ENCODE measurements at regions of chr3 and their contacts with region 1.

Region 1: DNA sequence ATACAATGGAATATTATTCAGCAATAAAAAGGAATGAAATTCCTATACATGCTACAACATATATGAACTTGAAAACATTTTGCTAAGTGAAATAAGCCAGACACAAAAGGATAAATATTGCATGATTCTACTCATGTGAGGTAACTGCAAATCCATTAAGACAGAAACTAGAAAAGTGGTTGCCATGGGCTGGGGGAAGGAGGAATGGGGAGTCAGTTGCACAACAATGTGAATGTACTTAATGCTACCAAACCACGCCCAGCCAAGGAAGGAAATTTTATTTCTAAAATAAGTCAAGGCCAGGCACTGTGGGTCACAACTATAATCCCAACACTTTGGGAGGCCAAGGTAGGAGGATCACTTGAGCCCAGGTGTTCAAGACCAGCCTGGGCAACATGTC is 9.8 kb upstream of the GMPPB start:
- DNase-seq: no peak
- ATAC-seq: no peak
- H3K4me3 Mint-ChIP-seq: no peak overlapping the region
- H3K27ac Mint-ChIP-seq: no peak overlapping the region
- H3K4me1 Mint-ChIP-seq: peaks cover under 1% of the 10 kb centered on the region
- H3K27me3 Mint-ChIP-seq: no peaks in the 10 kb centered on the region

Region 2: GRCh38 chr3:49454458-49454857 is 279.1 kb before region 1 on chr3:
- CTCF ChIA-PET with region 1: no interaction called
- POLR2A ChIA-PET with region 1: no interaction called
- intact Hi-C with region 1: no loop called
- DNase-seq: no peak
- ATAC-seq: no peak
- H3K4me3 Mint-ChIP-seq: no peak overlapping the region
- H3K27ac Mint-ChIP-seq: no peak overlapping the region
- H3K4me1 Mint-ChIP-seq: no peaks in the 10 kb centered on the region
- H3K27me3 Mint-ChIP-seq: no peaks in the 10 kb centered on the region

Region 3: DNA sequence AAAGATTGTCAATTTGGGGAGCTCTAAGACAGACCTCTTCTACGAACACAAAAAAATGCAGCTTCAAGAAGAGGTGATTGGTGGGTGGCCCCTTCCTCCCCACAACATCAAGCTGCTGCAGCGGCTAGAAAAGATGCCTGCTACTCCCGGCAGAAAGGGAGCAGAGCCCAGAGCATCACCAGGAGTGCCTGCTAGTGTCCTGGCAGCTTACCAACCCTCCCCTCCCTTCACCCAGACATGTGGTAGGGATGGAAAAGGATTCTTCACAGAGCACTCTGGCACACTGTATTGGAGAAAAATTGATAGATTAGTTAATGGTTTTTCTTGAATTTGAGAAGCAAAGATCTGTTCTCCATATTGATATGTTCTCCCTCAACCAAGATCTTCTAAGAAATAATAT is 42.0 kb after region 1 on chr3:
- CTCF ChIA-PET with region 1: no interaction called
- POLR2A ChIA-PET with region 1: no interaction called
- intact Hi-C with region 1: loop called in 1 of 2 experiments (anchors 2 kb)
- DNase-seq: no peak
- ATAC-seq: no peak
- H3K4me3 Mint-ChIP-seq: no peak overlapping the region
- H3K27ac Mint-ChIP-seq: no peak overlapping the region
- H3K4me1 Mint-ChIP-seq: peaks cover 34% of the 10 kb centered on the region
- H3K27me3 Mint-ChIP-seq: no peaks in the 10 kb centered on the region